ENCODE measurements at regions of chr16 and their contacts with region 1.

Region 1: GRCh38 chr16:2500918-2501750 is 12.6 kb upstream of the ATP6V0C start:
- DNase-seq: peak; percentile 23
- ATAC-seq: peak; percentile 99
- H3K4me3 ChIP-seq: no peak overlapping the region
- H3K27ac ChIP-seq: no peak overlapping the region
- H3K4me1 ChIP-seq: no peaks in the 10 kb centered on the region
- H3K27me3 ChIP-seq: no peaks in the 10 kb centered on the region
- CTCF ChIP-seq: peak; percentile 95 to 99 (median 99); a peak in 5 of 6 replicates
- EP300 ChIP-seq: no peak
- POLR2A ChIP-seq: no peak
- RAD21 ChIP-seq: peak; percentile 93

Region 2: GRCh38 chr16:2009789-2010510 is 491.2 kb before region 1 on chr16 and contains the start of gene ZNF598:
- CTCF ChIA-PET with region 1: no interaction called
- POLR2A ChIA-PET with region 1: no interaction called
- RAD21 ChIA-PET with region 1: no interaction called
- SMC1A ChIA-PET with region 1: no interaction called
- in situ Hi-C with region 1: loop called (anchors 10 kb)
- intact Hi-C with region 1: no loop called
- DNase-seq: no peak
- ATAC-seq: peak; percentile 93
- H3K4me3 ChIP-seq: peak within 1 kb of the TSS; percentile 100
- H3K27ac ChIP-seq: peak within 1 kb of the TSS; percentile 89
- H3K4me1 ChIP-seq: peaks cover 15% of the 10 kb centered on the region
- H3K27me3 ChIP-seq: no peaks in the 10 kb centered on the region
- CTCF ChIP-seq: no peak
- EP300 ChIP-seq: no peak
- POLR2A ChIP-seq: peak; percentile 94
- RAD21 ChIP-seq: no peak
- polyA plus RNA-seq, gene ZNF598: 0.08 to 0.84 TPM

Region 3: DNA sequence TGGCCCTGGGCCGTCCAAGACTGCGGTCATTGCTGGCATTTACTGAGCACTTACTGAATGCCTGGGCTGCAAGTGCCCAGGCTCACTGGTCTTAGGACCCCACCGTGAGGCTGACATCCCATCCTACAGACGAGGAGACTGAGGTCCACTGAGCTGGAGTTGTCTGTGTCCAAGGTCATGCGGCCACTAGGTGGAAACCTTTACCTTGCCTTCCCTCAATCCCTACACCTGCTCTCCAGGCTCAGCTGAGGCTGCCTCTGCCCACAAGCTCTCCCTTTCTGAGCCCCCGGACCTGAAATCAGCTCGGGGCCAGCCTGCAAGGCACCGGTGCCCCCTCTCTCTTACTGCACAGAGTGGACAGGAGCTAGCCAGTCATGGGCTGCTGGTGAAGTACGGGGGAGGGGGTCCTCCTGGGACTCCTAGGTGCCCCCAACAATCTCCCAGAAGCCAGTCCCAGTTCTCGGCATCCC is 306.2 kb before region 1 on chr16:
- CTCF ChIA-PET with region 1: interaction called, 10 read pairs
- POLR2A ChIA-PET with region 1: no interaction called
- RAD21 ChIA-PET with region 1: interaction called, 10 read pairs
- SMC1A ChIA-PET with region 1: no interaction called
- in situ Hi-C with region 1: no loop called
- intact Hi-C with region 1: loop called (anchors 2 kb)
- DNase-seq: peak; percentile 11
- ATAC-seq: peak; percentile 91
- H3K4me3 ChIP-seq: no peak overlapping the region
- H3K27ac ChIP-seq: no peak overlapping the region
- H3K4me1 ChIP-seq: no peaks in the 10 kb centered on the region; the same call in 1 of the 2 replicates
- H3K27me3 ChIP-seq: peaks cover 12 to 15% of the 10 kb centered on the region in 2 experiments
- CTCF ChIP-seq: peak; percentile 43 to 65 (median 48)
- EP300 ChIP-seq: no peak
- POLR2A ChIP-seq: no peak
- RAD21 ChIP-seq: peak; percentile 55

Region 4: DNA sequence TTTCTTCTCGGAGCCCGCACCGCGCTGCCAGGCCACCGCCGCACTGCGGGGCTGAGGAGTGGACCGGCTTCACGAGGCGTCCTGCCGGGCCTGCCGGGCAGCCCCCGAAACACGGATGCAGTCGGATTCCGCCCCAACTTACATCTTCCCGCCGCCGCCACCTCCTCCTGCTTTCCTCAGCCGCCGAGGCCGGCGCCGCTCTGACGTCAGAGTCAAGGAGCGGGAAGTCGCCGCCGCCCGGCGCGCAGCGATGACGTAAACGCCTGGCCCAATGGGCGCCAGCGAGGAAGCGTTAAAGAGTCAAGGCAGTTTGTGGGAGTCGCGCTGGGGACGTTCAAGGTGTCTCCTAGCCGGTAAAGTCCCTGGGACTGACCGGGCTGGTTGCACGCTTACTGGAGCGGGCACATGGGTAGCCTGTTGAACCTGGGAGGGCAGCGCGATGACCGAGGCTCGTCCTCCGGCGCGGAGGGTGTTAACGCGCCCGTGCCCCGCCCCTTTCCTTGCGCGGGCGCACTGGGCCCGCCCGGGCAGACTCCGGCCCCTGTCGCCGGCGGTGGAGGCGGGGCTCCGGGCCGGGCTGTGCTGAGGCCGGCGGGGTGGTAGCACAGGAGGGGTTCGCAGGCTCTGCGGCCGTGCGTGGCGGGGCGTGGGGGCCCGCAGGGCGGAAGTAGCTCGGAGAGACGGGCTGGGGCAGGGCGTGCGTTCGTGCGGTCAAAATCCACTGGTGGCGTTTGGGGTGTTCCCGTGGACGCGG is 233.0 kb before region 1 on chr16 and contains the start of gene RNPS1:
- CTCF ChIA-PET with region 1: interaction called, 5 read pairs
- POLR2A ChIA-PET with region 1: interaction called, 4 read pairs
- RAD21 ChIA-PET with region 1: no interaction called
- SMC1A ChIA-PET with region 1: no interaction called
- in situ Hi-C with region 1: no loop called
- intact Hi-C with region 1: loop called (anchors 10 kb)
- DNase-seq: peak; percentile 80
- ATAC-seq: peak; percentile 96
- H3K4me3 ChIP-seq: peak within 1 kb of the TSS; percentile 79
- H3K27ac ChIP-seq: peak within 1 kb of the TSS; percentile 90
- H3K4me1 ChIP-seq: peaks cover 11% of the 10 kb centered on the region
- H3K27me3 ChIP-seq: no peaks in the 10 kb centered on the region
- CTCF ChIP-seq: no peak
- EP300 ChIP-seq: 0 out of 4 replicates have a peak, but pooled peaks of 1 of the 2 experiments have one; percentile 10
- POLR2A ChIP-seq: peak; percentile 96
- RAD21 ChIP-seq: no peak
- polyA plus RNA-seq, gene RNPS1: 38.2 to 63.5 TPM

Region 5: DNA sequence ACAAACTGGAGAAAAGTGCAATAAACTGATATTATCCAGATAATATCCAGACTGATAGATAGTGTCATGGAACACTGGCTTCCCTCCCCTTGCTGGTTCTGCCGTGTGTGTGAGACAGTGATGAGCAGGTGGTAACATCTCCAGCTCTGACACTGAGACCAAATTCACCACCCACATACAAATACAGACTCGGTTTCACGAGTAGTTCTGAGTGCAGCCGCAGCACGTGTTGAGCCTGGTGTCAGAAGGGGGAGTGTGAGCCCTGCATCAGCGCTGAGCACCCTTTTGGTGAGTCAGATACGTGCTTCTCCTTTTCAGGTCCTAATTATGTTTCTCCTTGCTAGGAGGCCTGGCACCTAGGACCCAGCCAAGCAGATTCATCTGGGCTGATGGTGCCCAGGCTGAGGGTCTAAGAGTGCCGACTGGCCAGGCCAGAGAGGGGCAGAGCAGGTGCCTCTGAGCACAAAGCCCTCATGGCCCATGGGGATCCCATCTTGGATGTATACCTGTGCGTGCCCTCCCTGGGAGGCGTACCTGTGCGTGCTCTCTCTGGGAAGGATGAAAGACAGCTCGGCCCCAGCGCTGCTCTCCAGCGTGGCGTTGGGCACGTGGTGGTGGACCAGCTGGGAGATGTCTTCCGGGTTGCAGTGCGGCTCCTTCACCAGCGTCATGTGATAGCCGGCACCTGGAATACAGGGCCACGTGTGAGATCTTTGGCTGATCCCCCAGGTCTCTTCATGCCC is 205.9 kb before region 1 on chr16:
- CTCF ChIA-PET with region 1: interaction called, 10 read pairs
- POLR2A ChIA-PET with region 1: no interaction called
- RAD21 ChIA-PET with region 1: interaction called, 5 read pairs
- SMC1A ChIA-PET with region 1: no interaction called
- in situ Hi-C with region 1: no loop called
- intact Hi-C with region 1: no loop called
- DNase-seq: peak; percentile 55
- ATAC-seq: peak; percentile 93
- H3K4me3 ChIP-seq: no peak overlapping the region
- H3K27ac ChIP-seq: no peak overlapping the region
- H3K4me1 ChIP-seq: peaks cover 10% of the 10 kb centered on the region
- H3K27me3 ChIP-seq: no peaks in the 10 kb centered on the region
- CTCF ChIP-seq: peak in 1 of 3 experiments; percentile 26; a peak in 2 of 6 replicates
- EP300 ChIP-seq: peak; percentile 61 to 72; a peak in 3 of 4 replicates
- POLR2A ChIP-seq: no peak
- RAD21 ChIP-seq: no peak

Region 6: DNA sequence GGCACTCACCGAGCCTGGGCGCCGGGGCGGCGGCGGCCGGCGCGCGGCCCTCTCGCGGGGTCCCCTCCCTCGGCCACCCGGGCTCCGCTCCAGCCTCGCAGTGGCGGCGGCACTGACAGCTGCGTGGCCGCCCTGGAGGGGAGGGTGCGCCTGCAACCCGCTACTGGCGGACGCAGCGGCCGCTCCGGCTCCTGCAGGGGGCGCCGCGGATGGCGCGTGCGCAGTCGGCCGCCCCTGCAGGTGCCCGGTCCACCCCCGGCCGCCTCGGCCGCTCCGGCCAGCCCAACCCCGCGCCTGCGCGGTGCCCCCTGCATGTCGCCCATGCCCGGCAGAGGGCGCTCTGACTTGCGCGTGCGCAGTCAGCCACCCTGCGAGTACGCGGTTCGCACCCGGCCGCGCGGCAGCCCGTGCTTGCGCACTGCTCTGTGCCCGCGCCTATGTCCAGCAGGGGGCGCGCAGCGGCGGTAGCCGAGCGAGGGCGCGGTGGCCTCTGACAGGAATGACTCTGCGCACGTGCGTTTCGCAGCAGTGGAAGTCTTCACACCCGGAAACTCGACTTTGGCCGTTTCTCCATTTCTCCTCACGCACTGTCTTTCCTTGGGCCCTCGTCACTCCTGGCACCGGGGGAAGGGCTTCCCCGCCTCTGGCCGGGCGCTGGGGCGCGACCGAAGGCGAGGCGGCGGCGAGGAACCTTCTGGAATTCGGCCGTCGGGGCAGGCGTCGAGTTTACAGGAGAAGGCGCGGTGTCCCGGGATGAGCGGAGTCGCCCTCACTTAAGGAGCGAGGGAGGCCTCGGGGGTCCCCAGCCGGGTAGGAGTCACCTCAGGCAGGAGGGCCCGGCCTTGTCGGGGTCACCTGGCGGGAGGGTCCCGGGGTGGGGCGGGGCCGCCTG is 160.3 kb before region 1 on chr16 and contains the start of gene ABCA3:
- CTCF ChIA-PET with region 1: interaction called, 7 read pairs
- POLR2A ChIA-PET with region 1: no interaction called
- RAD21 ChIA-PET with region 1: no interaction called
- SMC1A ChIA-PET with region 1: no interaction called
- in situ Hi-C with region 1: loop called (anchors 5 kb)
- intact Hi-C with region 1: loop called (anchors 2 kb)
- DNase-seq: peak; percentile 79
- ATAC-seq: peak; percentile 94
- H3K4me3 ChIP-seq: peak within 1 kb of the TSS; percentile 94
- H3K27ac ChIP-seq: peak within 1 kb of the TSS; percentile 31
- H3K4me1 ChIP-seq: peaks cover 3% of the 10 kb centered on the region; the same call in 1 of the 2 replicates
- H3K27me3 ChIP-seq: no peaks in the 10 kb centered on the region
- CTCF ChIP-seq: peak; percentile 92 to 100 (median 94)
- EP300 ChIP-seq: 0 out of 4 replicates have a peak, but pooled peaks of 1 of the 2 experiments have one; percentile 21
- POLR2A ChIP-seq: peak; percentile 57; the same call in 1 of the 2 replicates
- RAD21 ChIP-seq: peak; percentile 62
- polyA plus RNA-seq, gene ABCA3: 0.71 to 1.3 TPM

Measured in GM12878 (cell line).